CD4-positive, alpha-beta T cell (primary cell): ENCODE measurements at regions of chr12 and their contacts with region 1.

Region 1: DNA sequence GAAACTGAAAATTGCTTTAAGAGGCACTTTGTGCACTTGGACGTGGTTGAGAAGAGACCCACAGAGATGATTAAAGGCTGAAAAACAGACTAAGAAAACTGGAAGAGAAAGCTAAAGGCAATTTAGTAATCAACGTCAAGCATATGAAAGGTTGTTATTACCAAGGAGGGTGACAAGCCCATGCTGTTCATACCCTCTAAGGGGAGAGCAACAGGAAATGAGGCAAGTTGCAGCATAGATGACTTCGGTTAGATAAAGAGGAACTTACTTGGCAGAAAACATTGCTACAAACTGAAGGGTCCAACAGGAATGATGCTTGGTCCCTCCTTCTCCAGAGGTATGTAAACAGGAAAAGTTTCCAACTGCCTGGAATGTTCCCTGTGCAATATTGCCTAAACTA is 107.8 kb downstream of the DUSP6 start:
- DNase-seq: peak in 4 of 14 experiments; percentile 12 to 57 (median 44)
- ATAC-seq: peak; percentile 59
- H3K4me3 ChIP-seq: no peak overlapping the region
- H3K4me3 Mint-ChIP-seq: peak overlapping the region; percentile 4
- H3K27ac ChIP-seq: no peak overlapping the region
- H3K27ac Mint-ChIP-seq: peak overlapping the region; percentile 74
- H3K4me1 ChIP-seq: peaks cover 22% of the 10 kb centered on the region
- H3K4me1 Mint-ChIP-seq: peaks cover 46% of the 10 kb centered on the region
- H3K27me3 ChIP-seq: no peaks in the 10 kb centered on the region
- H3K27me3 Mint-ChIP-seq: no peaks in the 10 kb centered on the region
- CTCF ChIP-seq: no peak

Region 2: GRCh38 chr12:89051065-89051677 is 193.4 kb before region 1 on chr12:
- CTCF ChIA-PET with region 1: no interaction called
- POLR2A ChIA-PET with region 1: no interaction called
- intact Hi-C with region 1: loop called in 1 of 2 experiments (anchors 1 kb)
- DNase-seq: peak in 6 of 14 experiments; percentile 1 to 74 (median 42)
- ATAC-seq: peak; percentile 61
- H3K4me3 ChIP-seq: no peak overlapping the region
- H3K4me3 Mint-ChIP-seq: no peak overlapping the region
- H3K27ac ChIP-seq: no peak overlapping the region
- H3K27ac Mint-ChIP-seq: no peak overlapping the region
- H3K4me1 ChIP-seq: no peaks in the 10 kb centered on the region
- H3K4me1 Mint-ChIP-seq: no peaks in the 10 kb centered on the region
- H3K27me3 ChIP-seq: no peaks in the 10 kb centered on the region
- H3K27me3 Mint-ChIP-seq: no peaks in the 10 kb centered on the region
- CTCF ChIP-seq: peak; percentile 88

Region 3: GRCh38 chr12:89212339-89212771 is 32.2 kb before region 1 on chr12:
- CTCF ChIA-PET with region 1: no interaction called
- POLR2A ChIA-PET with region 1: no interaction called
- intact Hi-C with region 1: loop called in 1 of 2 experiments (anchors 5 kb)
- DNase-seq: no peak
- ATAC-seq: no peak
- H3K4me3 ChIP-seq: no peak overlapping the region
- H3K4me3 Mint-ChIP-seq: no peak overlapping the region
- H3K27ac ChIP-seq: no peak overlapping the region
- H3K27ac Mint-ChIP-seq: no peak overlapping the region
- H3K4me1 ChIP-seq: no peaks in the 10 kb centered on the region
- H3K4me1 Mint-ChIP-seq: peaks cover 13% of the 10 kb centered on the region
- H3K27me3 ChIP-seq: no peaks in the 10 kb centered on the region
- H3K27me3 Mint-ChIP-seq: no peaks in the 10 kb centered on the region
- CTCF ChIP-seq: no peak

Region 4: DNA sequence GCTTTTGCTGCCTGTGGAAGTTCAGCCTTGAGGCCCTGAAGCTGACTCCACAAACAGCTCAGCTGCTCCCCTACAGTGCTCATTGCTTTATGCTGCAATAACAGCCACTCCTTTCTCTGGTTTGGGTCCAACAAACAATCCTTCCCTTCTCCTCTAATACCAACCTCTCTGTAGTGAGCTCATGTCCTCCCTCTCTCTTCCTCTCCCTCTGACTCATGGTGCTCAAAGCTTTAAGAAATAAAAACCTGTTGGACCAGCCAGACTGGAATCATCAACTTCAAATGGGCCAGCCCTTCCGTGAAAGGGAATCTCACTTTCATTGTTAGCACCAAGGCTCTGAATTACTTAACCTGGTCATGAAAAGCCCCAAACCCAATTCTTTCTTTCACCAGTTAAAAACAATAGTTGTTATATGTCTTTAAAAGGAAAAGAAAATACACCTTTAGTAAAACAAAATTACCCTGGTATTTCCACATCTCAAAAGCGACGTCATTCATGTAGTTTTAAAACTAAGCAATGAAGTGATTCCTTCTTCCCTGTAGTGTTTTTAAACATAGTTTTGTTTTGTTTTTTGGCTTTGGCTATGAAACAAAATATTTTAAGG is 18.6 kb before region 1 on chr12:
- CTCF ChIA-PET with region 1: interaction called, 4 read pairs
- POLR2A ChIA-PET with region 1: interaction called, 13 read pairs
- intact Hi-C with region 1: no loop called
- DNase-seq: peak in 2 of 14 experiments; percentile 24 to 33
- ATAC-seq: peak; percentile 31
- H3K4me3 ChIP-seq: no peak overlapping the region
- H3K4me3 Mint-ChIP-seq: no peak overlapping the region
- H3K27ac ChIP-seq: peak overlapping the region in 1 of 2 donors; percentile 10
- H3K27ac Mint-ChIP-seq: peak overlapping the region; percentile 54
- H3K4me1 ChIP-seq: peaks cover 24% of the 10 kb centered on the region
- H3K4me1 Mint-ChIP-seq: peaks cover 39% of the 10 kb centered on the region
- H3K27me3 ChIP-seq: no peaks in the 10 kb centered on the region
- H3K27me3 Mint-ChIP-seq: no peaks in the 10 kb centered on the region
- CTCF ChIP-seq: no peak

Region 5: GRCh38 chr12:89280833-89281538 is 36.5 kb after region 1 on chr12:
- CTCF ChIA-PET with region 1: no interaction called
- POLR2A ChIA-PET with region 1: interaction called, 17 read pairs
- intact Hi-C with region 1: loop called in 1 of 2 experiments (anchors 5 kb)
- DNase-seq: peak in 4 of 14 experiments; percentile 1 to 76 (median 46)
- ATAC-seq: peak; percentile 96
- H3K4me3 ChIP-seq: no peak overlapping the region
- H3K4me3 Mint-ChIP-seq: peak overlapping the region; percentile 50
- H3K27ac ChIP-seq: no peak overlapping the region
- H3K27ac Mint-ChIP-seq: peak overlapping the region; percentile 84
- H3K4me1 ChIP-seq: peaks cover 10% of the 10 kb centered on the region
- H3K4me1 Mint-ChIP-seq: peaks cover 48% of the 10 kb centered on the region
- H3K27me3 ChIP-seq: no peaks in the 10 kb centered on the region
- H3K27me3 Mint-ChIP-seq: no peaks in the 10 kb centered on the region
- CTCF ChIP-seq: no peak

Region 6: DNA sequence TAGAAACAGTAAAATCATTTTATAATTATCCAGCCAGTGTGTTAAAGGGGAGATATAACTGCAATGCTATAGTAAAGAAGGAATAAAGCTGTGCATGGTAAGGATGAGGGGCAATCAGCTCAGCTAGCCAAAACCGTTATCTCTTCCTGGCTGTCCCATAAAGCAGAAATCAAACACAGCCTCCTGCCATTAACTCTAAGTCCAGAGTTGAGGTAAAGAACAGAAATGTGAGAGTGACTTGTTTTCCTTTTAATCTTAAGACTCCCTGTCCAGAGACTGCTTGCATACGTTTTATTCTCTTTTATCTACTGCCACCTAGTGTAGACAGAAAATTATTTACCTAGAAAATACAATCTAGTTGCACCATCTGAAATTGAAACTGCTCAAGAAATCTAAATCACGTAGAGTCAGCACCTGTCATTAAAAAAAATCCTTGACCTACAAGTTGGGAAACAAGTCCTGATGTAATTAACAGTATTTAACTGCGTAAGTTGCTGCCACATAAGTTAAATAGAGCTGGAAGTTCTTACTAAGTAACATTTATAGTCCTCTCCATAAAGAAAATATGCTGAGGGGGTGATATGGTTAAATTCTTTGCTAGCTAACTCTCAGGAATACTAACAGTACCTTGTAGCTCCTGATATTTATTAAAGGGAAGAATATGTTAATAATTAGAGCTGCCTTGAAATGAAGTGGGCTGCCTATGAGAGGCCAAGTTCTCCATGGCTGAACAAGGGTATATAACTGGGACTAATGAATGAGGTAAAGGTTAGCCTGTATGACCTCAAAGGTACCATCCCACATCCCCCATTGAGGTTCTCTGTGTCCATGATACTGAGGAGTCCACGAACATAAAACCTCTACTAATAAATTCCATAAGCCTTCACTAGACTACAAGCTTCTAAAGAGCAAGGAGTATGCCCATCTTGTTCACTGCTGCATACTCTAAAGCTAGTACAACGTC is 217.4 kb after region 1 on chr12:
- CTCF ChIA-PET with region 1: no interaction called
- POLR2A ChIA-PET with region 1: no interaction called
- intact Hi-C with region 1: loop called in 1 of 2 experiments (anchors 10 kb)
- DNase-seq: peak in 3 of 14 experiments; percentile 68 to 78 (median 69)
- ATAC-seq: peak; percentile 88
- H3K4me3 ChIP-seq: no peak overlapping the region
- H3K4me3 Mint-ChIP-seq: peak overlapping the region; percentile 40
- H3K27ac ChIP-seq: no peak overlapping the region
- H3K27ac Mint-ChIP-seq: no peak overlapping the region
- H3K4me1 ChIP-seq: no peaks in the 10 kb centered on the region
- H3K4me1 Mint-ChIP-seq: peaks cover 16% of the 10 kb centered on the region
- H3K27me3 ChIP-seq: no peaks in the 10 kb centered on the region
- H3K27me3 Mint-ChIP-seq: no peaks in the 10 kb centered on the region
- CTCF ChIP-seq: peak; percentile 81